ENCODE measurements at regions of chr3 and their contacts with region 1.

Region 1: GRCh38 chr3:186259612-186260383 is 102.2 kb downstream of the DGKG start:
- DNase-seq: peak; percentile 81 to 85
- H3K4me3 ChIP-seq: no peak overlapping the region
- H3K4me3 Mint-ChIP-seq: peak overlapping the region; percentile 25
- H3K27ac Mint-ChIP-seq: no peak overlapping the region
- H3K4me1 ChIP-seq: 0 out of 2 replicates have a peak, but pooled peaks cover 5% of the 10 kb centered on the region
- H3K4me1 Mint-ChIP-seq: peaks cover 7% of the 10 kb centered on the region
- H3K27me3 ChIP-seq: no peaks in the 10 kb centered on the region
- H3K27me3 Mint-ChIP-seq: peaks cover 5% of the 10 kb centered on the region
- CTCF ChIP-seq: peak; percentile 77 to 99

Region 2: DNA sequence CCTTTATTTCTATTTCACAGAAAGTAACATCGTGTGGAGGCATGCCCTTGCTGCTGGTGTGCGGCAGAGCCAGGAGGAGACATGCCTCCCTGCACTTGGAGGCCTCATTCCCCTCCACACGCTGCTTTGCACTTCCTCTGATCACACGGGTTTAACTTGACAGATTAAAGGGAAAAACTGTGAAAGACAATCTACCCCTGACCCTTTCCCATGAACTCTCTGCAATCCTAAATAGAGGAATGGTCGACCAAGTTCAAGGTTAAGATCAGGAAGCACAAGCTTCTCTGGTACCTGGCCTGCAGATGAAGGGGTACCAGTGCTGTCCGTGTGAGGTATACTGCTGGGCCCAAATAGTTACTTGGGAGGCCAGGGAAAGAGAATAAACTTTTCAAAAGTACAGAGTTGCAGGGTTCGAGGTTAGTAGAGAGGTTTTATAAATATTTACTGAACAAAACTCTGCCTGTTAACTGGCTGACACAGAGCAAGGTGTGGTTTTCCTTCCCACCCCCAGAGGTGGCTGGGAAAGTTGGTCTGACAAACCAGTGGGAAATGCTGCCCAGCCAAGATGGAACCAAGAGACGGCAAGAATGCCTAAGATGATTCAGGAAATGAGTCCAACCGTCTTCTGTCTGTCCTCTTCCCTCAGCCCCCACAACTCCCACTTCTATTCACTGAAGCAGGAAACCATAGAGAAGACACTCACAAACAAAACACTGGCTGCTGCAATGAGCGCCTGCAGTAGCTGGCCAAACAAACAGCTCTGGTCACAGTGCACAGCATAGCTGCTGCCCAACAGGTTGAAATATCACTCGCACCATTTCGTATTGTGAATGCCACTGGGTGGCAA is 514.6 kb before region 1 on chr3:
- CTCF ChIA-PET with region 1: no interaction called
- POLR2A ChIA-PET with region 1: no interaction called
- intact Hi-C with region 1: no loop called
- DNase-seq: no peak
- H3K4me3 ChIP-seq: no peak overlapping the region
- H3K4me3 Mint-ChIP-seq: no peak overlapping the region
- H3K27ac Mint-ChIP-seq: no peak overlapping the region
- H3K4me1 ChIP-seq: peaks cover 4% of the 10 kb centered on the region; the same call in 1 of the 2 replicates
- H3K4me1 Mint-ChIP-seq: peaks cover 1% of the 10 kb centered on the region
- H3K27me3 ChIP-seq: no peaks in the 10 kb centered on the region
- H3K27me3 Mint-ChIP-seq: no peaks in the 10 kb centered on the region
- CTCF ChIP-seq: no peak

Region 3: DNA sequence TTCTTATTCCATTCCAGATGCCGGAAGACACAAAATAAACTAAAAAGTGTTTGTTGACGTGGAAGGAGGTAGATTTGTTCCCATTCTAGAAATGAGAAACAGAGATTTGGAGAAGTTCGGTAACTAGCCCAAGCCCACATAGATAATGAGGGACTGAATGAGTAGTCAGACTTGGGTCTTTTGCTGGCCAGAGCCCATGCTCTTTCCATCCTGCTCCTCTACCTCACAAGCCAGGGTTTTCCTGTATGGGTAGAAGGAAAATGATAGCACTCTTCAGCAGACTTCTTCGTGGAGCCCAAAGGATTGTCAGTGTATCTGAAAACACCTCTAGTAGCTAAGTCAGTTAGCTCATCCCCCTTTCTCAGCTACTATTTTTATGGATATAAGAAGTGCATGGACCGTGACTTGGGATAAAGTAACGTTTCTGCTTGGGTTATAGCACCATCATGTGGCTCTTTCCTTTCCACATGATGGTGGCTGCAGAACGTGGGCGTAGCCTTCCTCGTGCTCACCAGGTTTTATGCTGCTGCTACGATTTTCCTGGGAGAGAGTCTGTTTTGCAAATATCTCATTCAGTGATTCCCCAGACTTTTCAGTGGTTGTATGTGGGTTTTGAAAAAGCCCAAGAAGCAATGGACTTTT is 17.6 kb after region 1 on chr3:
- CTCF ChIA-PET with region 1: interaction called, 11 read pairs
- POLR2A ChIA-PET with region 1: no interaction called
- intact Hi-C with region 1: no loop called
- DNase-seq: peak in 1 of 2 experiments; percentile 25
- H3K4me3 ChIP-seq: no peak overlapping the region
- H3K4me3 Mint-ChIP-seq: no peak overlapping the region
- H3K27ac Mint-ChIP-seq: no peak overlapping the region
- H3K4me1 ChIP-seq: no peaks in the 10 kb centered on the region
- H3K4me1 Mint-ChIP-seq: no peaks in the 10 kb centered on the region
- H3K27me3 ChIP-seq: no peaks in the 10 kb centered on the region
- H3K27me3 Mint-ChIP-seq: peaks cover 4% of the 10 kb centered on the region
- CTCF ChIP-seq: peak; percentile 27 to 44

Region 4: DNA sequence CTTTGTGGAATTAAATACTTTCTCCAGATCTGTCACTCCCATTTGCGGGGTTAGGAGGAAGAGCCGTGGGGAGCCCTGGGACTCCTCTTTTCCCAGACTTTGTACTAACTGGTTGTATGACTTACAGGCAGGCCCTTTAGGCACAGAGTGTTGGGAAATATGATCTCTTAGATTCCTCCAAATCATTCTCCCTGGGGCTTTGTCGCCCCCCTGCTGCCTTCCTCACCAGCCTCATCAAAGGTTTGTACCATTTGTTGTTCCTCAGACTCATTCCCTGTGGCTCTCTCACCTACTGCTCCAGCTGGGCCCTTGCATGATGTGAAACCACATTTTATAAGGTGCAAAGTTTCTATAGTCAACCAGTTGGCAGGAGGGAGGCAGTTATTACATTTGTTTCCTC is 228.0 kb after region 1 on chr3:
- CTCF ChIA-PET with region 1: no interaction called
- POLR2A ChIA-PET with region 1: no interaction called
- intact Hi-C with region 1: loop called (anchors 2 kb)
- DNase-seq: no peak
- H3K4me3 ChIP-seq: no peak overlapping the region
- H3K4me3 Mint-ChIP-seq: no peak overlapping the region
- H3K27ac Mint-ChIP-seq: no peak overlapping the region
- H3K4me1 ChIP-seq: 0 out of 2 replicates have a peak, but pooled peaks cover 4% of the 10 kb centered on the region
- H3K4me1 Mint-ChIP-seq: peaks cover 13% of the 10 kb centered on the region
- H3K27me3 ChIP-seq: no peaks in the 10 kb centered on the region
- H3K27me3 Mint-ChIP-seq: no peaks in the 10 kb centered on the region
- CTCF ChIP-seq: no peak

Region 5: GRCh38 chr3:186540221-186540834 is 280.5 kb after region 1 on chr3:
- CTCF ChIA-PET with region 1: interaction called, 24 read pairs
- POLR2A ChIA-PET with region 1: no interaction called
- intact Hi-C with region 1: loop called (anchors 1 kb)
- DNase-seq: peak; percentile 66 to 76
- H3K4me3 ChIP-seq: no peak overlapping the region
- H3K4me3 Mint-ChIP-seq: no peak overlapping the region
- H3K27ac Mint-ChIP-seq: no peak overlapping the region
- H3K4me1 ChIP-seq: no peaks in the 10 kb centered on the region
- H3K4me1 Mint-ChIP-seq: peaks cover 9% of the 10 kb centered on the region
- H3K27me3 ChIP-seq: no peaks in the 10 kb centered on the region
- H3K27me3 Mint-ChIP-seq: no peaks in the 10 kb centered on the region
- CTCF ChIP-seq: peak; percentile 67

Region 6: DNA sequence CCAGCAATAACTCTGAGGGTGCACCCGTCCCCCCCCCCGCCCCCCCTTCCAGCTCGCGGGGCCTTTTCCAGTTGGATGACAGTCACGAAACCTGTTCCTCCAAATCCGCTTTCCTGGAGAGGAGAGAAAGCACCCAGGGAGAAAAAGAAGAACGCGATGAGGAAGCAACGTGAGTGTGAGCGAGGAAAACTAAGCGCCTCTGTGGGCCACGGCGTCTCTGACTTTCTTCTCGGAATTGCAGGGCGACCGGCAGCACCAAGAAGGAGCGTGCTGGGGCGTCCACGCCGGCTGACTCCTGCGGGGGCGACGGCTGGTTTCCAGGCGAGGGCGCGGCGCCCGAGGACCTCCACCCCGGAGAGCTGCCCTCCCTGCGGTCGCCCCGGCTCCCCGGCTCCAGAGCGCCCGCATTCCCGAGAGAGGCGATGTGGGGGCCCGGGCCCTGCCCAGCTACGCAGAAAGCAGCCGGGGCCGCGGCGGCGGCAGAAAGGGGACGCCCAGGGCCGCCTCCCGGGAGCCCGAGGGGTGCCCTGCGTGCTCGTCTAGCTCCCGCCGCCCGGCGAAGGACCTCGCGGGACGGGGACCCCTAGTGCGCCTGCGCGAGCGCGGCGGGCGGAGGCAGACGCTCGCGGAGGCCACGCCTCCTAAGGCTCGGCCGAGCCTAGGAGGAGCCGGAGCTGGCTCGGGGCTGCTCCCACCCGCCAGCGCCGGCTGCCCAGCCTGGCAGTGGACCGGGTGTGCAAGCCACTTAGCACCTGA is 567.4 kb after region 1 on chr3:
- CTCF ChIA-PET with region 1: no interaction called
- POLR2A ChIA-PET with region 1: no interaction called
- intact Hi-C with region 1: loop called (anchors 10 kb)
- DNase-seq: peak; percentile 71 to 90
- H3K4me3 ChIP-seq: peak overlapping the region; percentile 76
- H3K4me3 Mint-ChIP-seq: peak overlapping the region; percentile 70
- H3K27ac Mint-ChIP-seq: no peak overlapping the region
- H3K4me1 ChIP-seq: 0 out of 2 replicates have a peak, but pooled peaks cover 2% of the 10 kb centered on the region
- H3K4me1 Mint-ChIP-seq: peaks cover 7% of the 10 kb centered on the region
- H3K27me3 ChIP-seq: peaks cover 1% of the 10 kb centered on the region; the same call in 1 of the 2 replicates
- H3K27me3 Mint-ChIP-seq: peaks cover 12% of the 10 kb centered on the region
- CTCF ChIP-seq: no peak

Measured in Caco-2 (cell line).